GM12878 (cell line): ENCODE measurements at regions of chr1 and their contacts with region 1.

Region 1: DNA sequence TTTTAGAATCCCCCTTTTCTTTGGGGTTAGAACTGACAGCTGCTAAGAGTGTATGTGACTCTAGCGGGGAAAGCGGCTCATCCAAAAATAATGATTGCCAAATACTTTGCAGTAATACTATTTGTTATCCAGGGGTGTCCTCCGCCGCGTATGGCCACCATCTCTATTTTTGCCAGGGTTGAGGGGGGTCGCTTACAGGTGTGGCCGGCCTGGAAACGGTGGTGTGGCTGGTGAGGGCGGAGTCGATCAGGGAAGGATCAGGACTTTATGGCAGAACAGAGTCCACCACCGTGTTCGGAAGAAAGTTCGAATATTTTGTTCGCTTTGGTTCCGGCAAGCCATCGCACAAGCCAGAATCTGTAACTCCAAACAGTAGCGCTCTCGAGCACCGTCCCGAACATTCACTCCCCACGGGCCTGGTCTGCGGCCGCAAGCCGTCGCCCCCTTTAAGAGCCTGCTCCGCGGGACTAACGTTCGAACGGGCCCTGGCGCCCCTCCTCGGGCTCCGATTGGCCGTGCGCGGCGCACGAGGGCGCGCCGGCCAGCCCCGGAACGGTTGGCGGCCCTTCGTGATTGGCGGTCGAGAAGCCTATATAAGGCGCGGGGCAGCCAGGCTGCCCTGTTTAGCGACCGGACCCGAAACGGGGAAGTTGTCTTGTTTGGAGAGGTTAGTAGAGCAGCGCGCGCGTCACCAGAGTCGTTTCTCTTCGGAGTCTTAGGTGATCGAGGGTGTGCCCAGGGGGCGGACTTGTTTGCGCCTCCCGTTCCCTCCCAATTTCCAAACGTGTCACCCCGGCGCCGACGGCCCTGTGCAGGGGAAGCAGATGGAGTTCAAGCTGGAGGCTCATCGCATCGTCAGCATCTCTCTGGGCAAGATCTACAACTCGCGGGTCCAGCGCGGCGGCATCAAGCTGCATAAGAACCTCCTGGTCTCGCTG is at the start of gene IER5:
- DNase-seq: peak; percentile 83
- ATAC-seq: peak; percentile 82
- H3K4me3 ChIP-seq: peak within 1 kb of the TSS; percentile 99
- H3K27ac ChIP-seq: peak within 1 kb of the TSS; percentile 97
- H3K4me1 ChIP-seq: peaks cover 13% of the 10 kb centered on the region; the same call in 1 of the 2 replicates
- H3K27me3 ChIP-seq: no peaks in the 10 kb centered on the region
- CTCF ChIP-seq: 0 out of 6 replicates have a peak, but pooled peaks of 1 of the 3 experiments have one; percentile 0
- EP300 ChIP-seq: 0 out of 4 replicates have a peak, but pooled peaks of 1 of the 2 experiments have one; percentile 15
- POLR2A ChIP-seq: peak; percentile 98
- RAD21 ChIP-seq: no peak
- polyA plus RNA-seq, gene IER5: 6.2 to 19.5 TPM

Region 2: DNA sequence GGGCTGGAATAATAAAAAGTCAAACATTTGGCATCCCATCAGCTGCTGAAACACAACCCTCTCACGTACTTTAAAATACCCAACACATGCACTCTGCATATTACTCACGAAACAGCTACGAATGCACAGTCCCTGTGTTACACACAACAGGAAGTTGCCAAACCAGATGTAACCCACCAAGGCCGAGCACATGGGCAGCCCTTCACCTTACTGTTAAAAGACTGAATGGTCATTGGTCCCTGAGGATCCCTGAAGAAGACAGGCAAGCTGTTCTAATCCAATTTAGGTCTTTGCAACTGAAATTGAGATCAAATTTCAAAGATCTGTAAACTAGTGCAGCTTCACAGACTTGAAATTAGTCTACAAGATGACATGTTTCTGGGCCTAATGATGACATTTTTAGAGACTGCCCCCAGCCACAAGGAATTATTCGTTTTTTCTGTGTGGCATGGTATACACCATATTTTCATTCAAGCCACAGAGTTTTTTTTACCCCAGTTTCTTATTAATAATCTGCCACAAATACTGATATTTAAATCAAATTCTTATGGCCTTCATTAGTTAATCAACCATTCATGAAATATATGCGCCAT is 25.4 kb before region 1 on chr1:
- CTCF ChIA-PET with region 1: interaction called, 14 read pairs
- POLR2A ChIA-PET with region 1: interaction called, 20 read pairs
- RAD21 ChIA-PET with region 1: interaction called, 18 read pairs
- SMC1A ChIA-PET with region 1: interaction called, 40 read pairs
- in situ Hi-C with region 1: no loop called
- intact Hi-C with region 1: loop called (anchors 1 kb)
- DNase-seq: peak; percentile 87
- ATAC-seq: peak; percentile 90
- H3K4me3 ChIP-seq: no peak overlapping the region
- H3K27ac ChIP-seq: peak overlapping the region; percentile 96
- H3K4me1 ChIP-seq: peaks cover 32% of the 10 kb centered on the region
- H3K27me3 ChIP-seq: no peaks in the 10 kb centered on the region
- CTCF ChIP-seq: no peak
- EP300 ChIP-seq: 0 out of 4 replicates have a peak, but pooled peaks of 1 of the 2 experiments have one; percentile 25
- POLR2A ChIP-seq: 0 out of 2 replicates have a peak, but pooled peaks have one; percentile 3
- RAD21 ChIP-seq: no peak

Region 3: GRCh38 chr1:181099152-181100014 is 11.0 kb after region 1 on chr1:
- CTCF ChIA-PET with region 1: interaction called, 18 read pairs
- POLR2A ChIA-PET with region 1: interaction called, 142 read pairs
- RAD21 ChIA-PET with region 1: interaction called, 45 read pairs
- SMC1A ChIA-PET with region 1: interaction called, 123 read pairs
- in situ Hi-C with region 1: no loop called
- intact Hi-C with region 1: no loop called
- DNase-seq: peak; percentile 95
- ATAC-seq: peak; percentile 60
- H3K4me3 ChIP-seq: peak overlapping the region; percentile 18
- H3K27ac ChIP-seq: peak overlapping the region; percentile 89
- H3K4me1 ChIP-seq: peaks cover 86% of the 10 kb centered on the region
- H3K27me3 ChIP-seq: no peaks in the 10 kb centered on the region
- CTCF ChIP-seq: no peak
- EP300 ChIP-seq: peak; percentile 67 to 90; a peak in 3 of 4 replicates
- POLR2A ChIP-seq: no peak
- RAD21 ChIP-seq: no peak; the same call in 1 of the 2 replicates

Region 4: GRCh38 chr1:181128592-181129497 is 40.5 kb after region 1 on chr1:
- CTCF ChIA-PET with region 1: interaction called, 1,067 read pairs
- POLR2A ChIA-PET with region 1: interaction called, 77 read pairs
- RAD21 ChIA-PET with region 1: interaction called, 966 read pairs
- SMC1A ChIA-PET with region 1: interaction called, 1,399 read pairs
- in situ Hi-C with region 1: loop called (anchors 5 kb)
- intact Hi-C with region 1: loop called (anchors 1 kb)
- DNase-seq: no peak
- ATAC-seq: peak; percentile 66
- H3K4me3 ChIP-seq: peak overlapping the region; percentile 63
- H3K27ac ChIP-seq: peak overlapping the region; percentile 92
- H3K4me1 ChIP-seq: peaks cover 79% of the 10 kb centered on the region
- H3K27me3 ChIP-seq: no peaks in the 10 kb centered on the region
- CTCF ChIP-seq: no peak
- EP300 ChIP-seq: peak in 1 of 2 experiments; percentile 89; a peak in 2 of 4 replicates
- POLR2A ChIP-seq: peak; percentile 57
- RAD21 ChIP-seq: no peak; the same call in 1 of the 2 replicates

Region 5: GRCh38 chr1:181152892-181153633 is 64.7 kb after region 1 on chr1:
- CTCF ChIA-PET with region 1: interaction called, 1,067 read pairs
- POLR2A ChIA-PET with region 1: interaction called, 10 read pairs
- RAD21 ChIA-PET with region 1: interaction called, 12 read pairs
- SMC1A ChIA-PET with region 1: interaction called, 1,399 read pairs
- in situ Hi-C with region 1: no loop called
- intact Hi-C with region 1: no loop called
- DNase-seq: no peak
- ATAC-seq: peak; percentile 88
- H3K4me3 ChIP-seq: no peak overlapping the region
- H3K27ac ChIP-seq: peak overlapping the region; percentile 62
- H3K4me1 ChIP-seq: peaks cover 48% of the 10 kb centered on the region
- H3K27me3 ChIP-seq: no peaks in the 10 kb centered on the region
- CTCF ChIP-seq: peak; percentile 19 to 40 (median 40); a peak in 4 of 6 replicates
- EP300 ChIP-seq: peak; percentile 57 to 68; a peak in 2 of 4 replicates
- POLR2A ChIP-seq: peak; percentile 61
- RAD21 ChIP-seq: peak; percentile 41; the same call in 1 of the 2 replicates